Transverse colon (tissue), 4 donors: ENCODE measurements at regions of chr5 and their contacts with region 1.

Region 1: GRCh38 chr5:127492854-127493738 is 24.3 kb upstream of the PRRC1 start:
- DNase-seq: no peak
- H3K4me3 ChIP-seq: peak overlapping the region in 1 of 4 donors; percentile 10
- H3K27ac ChIP-seq: peak overlapping the region; percentile 69 to 77 (median 74)
- H3K4me1 ChIP-seq: peaks cover 0 to 27% (median 7%) of the 10 kb centered on the region in 4 donors
- H3K27me3 ChIP-seq: peaks cover 8% of the 10 kb centered on the region
- CTCF ChIP-seq: peak; percentile 62 to 93 (median 71)
- EP300 ChIP-seq: no peak
- POLR2A ChIP-seq: no peak

Region 2: DNA sequence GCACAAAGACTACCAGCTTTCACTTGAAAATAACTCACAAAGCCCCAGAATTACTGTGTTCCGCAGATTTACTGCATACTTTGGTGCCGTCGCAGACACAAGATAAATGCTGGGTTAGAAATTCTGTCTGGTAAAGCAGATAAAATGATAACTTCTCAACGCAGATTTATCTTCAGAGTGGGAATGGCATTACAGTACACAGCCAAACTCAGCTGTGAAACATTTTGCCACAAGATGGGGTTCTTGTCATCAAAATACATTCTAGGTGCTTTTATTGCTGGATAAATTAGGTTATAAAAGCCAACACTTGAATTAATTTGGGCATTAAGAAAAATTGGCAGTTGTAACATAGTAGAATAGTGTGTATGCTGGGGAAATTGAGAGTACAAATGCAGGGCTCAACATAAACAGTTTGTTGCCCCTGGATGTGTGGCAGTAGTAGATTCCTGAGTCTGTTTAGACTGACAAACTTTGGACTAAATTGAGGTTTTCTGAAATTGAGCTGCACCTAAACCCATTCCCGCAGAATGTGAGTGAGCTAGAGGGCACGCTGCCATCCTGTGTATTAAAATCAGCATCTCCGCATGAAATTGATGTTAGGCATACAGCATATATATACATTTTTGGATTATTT is 655.1 kb before region 1 on chr5:
- in situ Hi-C with region 1: no loop called
- intact Hi-C with region 1: loop called (anchors 10 kb)
- DNase-seq: no peak
- H3K4me3 ChIP-seq: no peak overlapping the region
- H3K27ac ChIP-seq: no peak overlapping the region
- H3K4me1 ChIP-seq: no peaks in the 10 kb centered on the region
- H3K27me3 ChIP-seq: no peaks in the 10 kb centered on the region
- CTCF ChIP-seq: peak; percentile 31 to 40 (median 38)
- EP300 ChIP-seq: no peak
- POLR2A ChIP-seq: no peak

Region 3: GRCh38 chr5:127299678-127300077 is 193.4 kb before region 1 on chr5:
- in situ Hi-C with region 1: loop called in 3 of 4 experiments (anchors 10 to 25 kb)
- intact Hi-C with region 1: no loop called
- DNase-seq: no peak
- H3K4me3 ChIP-seq: no peak overlapping the region
- H3K27ac ChIP-seq: no peak overlapping the region
- H3K4me1 ChIP-seq: no peaks in the 10 kb centered on the region
- H3K27me3 ChIP-seq: no peaks in the 10 kb centered on the region
- CTCF ChIP-seq: peak in 2 of 5 experiments; percentile 4 to 11
- EP300 ChIP-seq: no peak
- POLR2A ChIP-seq: no peak